ENCODE measurements at regions of chr12 and their contacts with region 1.

Region 1: DNA sequence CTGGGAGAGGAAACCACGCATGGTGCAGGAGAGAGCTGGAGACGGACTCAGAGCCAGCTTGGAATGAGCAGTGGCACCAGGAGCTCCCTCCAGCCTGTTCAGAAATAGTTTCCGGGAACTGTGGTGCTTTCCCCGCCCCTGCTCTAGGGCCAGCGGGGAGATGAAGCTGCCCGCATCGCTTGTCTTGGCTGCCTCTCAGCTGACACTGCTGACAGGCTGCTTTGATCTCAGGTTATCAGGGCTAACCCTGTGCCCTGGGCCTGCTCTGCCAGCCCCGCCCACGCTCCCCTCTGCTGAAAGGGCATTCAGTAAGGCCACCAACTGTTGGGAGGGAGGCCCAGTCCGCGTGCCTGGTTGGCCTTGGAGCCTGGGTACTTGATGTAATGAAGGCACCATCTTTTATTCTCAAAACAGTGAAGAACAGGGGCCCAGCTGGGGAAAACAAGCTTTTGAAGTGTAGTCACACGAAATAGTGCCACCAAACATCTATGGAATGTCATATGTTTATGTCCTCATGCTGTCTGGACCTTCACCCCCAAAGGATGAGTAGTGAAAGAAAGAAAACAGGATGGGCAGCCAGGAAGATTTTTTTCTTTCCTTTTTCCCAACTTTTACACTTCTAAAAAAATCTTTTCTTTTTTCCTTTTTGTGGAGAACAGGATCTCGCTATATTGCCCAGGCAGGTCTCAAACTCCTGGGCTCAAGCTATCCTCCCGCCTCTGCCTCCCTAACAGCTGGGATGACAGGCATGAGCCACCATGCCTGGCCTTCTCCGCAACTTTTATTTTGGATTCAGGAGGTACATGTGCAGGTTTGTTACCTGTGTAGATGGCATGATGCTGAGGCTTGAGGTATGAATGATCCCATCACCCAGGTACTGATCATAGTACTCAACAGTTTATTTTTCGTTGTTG is 115.9 kb upstream of the TBX3 start:
- DNase-seq: peak; percentile 100
- ATAC-seq: peak; percentile 99
- H3K4me3 ChIP-seq: no peak overlapping the region
- H3K27ac ChIP-seq: peak overlapping the region; percentile 85
- H3K4me1 ChIP-seq: peaks cover 46% of the 10 kb centered on the region
- H3K27me3 ChIP-seq: no peaks in the 10 kb centered on the region
- CTCF ChIP-seq: peak; percentile 36; the same call in 1 of the 2 replicates
- EP300 ChIP-seq: peak; percentile 91 to 98
- POLR2A ChIP-seq: peak; percentile 66 to 67
- RAD21 ChIP-seq: peak; percentile 65

Region 2: DNA sequence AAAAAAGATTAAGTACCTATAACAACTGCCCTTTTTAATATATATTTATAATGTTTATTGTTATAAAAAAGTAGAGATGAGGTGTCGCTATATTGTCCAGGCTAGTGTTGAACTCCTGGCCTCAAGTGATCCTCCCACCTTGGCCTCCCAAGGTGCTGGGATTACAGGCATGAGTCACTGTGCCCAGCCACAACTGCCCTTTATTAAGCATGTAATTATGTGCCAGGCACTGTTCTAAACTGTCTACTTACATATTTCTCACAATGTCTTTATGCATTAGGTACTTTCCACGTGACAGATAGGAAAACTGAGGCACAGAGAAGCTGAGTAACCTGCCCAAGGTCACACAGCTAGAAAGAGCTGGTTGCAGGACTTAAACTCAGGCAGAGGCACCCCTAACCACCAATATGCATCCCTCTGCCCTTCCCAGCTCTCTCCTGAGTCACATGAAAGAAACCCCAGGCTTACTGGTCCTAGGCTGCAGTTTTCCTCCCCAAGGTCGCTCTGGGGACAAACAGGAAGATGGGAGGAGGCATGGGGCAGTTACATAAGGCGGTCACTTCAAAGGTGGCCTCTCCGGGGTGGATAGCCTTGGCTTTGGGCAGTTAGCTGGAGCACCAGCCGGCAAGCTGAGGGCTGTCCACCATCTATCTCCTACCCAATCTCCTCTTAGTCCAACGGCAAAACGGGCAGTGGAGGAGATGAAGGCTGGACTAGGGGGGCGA is 61.2 kb before region 1 on chr12:
- CTCF ChIA-PET with region 1: no interaction called
- POLR2A ChIA-PET with region 1: interaction called, 10 read pairs
- in situ Hi-C with region 1: no loop called
- intact Hi-C with region 1: loop called (anchors 10 kb)
- DNase-seq: peak; percentile 96
- ATAC-seq: peak; percentile 93
- H3K4me3 ChIP-seq: no peak overlapping the region
- H3K27ac ChIP-seq: peak overlapping the region; percentile 32
- H3K4me1 ChIP-seq: peaks cover 39% of the 10 kb centered on the region
- H3K27me3 ChIP-seq: no peaks in the 10 kb centered on the region
- CTCF ChIP-seq: peak; percentile 27; the same call in 1 of the 2 replicates
- EP300 ChIP-seq: peak in 1 of 2 experiments; percentile 85; a peak in 2 of 4 replicates
- POLR2A ChIP-seq: no peak
- RAD21 ChIP-seq: no peak

Region 3: GRCh38 chr12:114744691-114745090 is 55.1 kb before region 1 on chr12:
- CTCF ChIA-PET with region 1: no interaction called
- POLR2A ChIA-PET with region 1: interaction called, 10 read pairs
- in situ Hi-C with region 1: no loop called
- intact Hi-C with region 1: loop called (anchors 10 kb)
- DNase-seq: no peak
- ATAC-seq: no peak; the same call in 2 of the 3 replicates
- H3K4me3 ChIP-seq: no peak overlapping the region
- H3K27ac ChIP-seq: no peak overlapping the region
- H3K4me1 ChIP-seq: peaks cover 50% of the 10 kb centered on the region
- H3K27me3 ChIP-seq: no peaks in the 10 kb centered on the region
- CTCF ChIP-seq: no peak
- EP300 ChIP-seq: no peak
- POLR2A ChIP-seq: no peak
- RAD21 ChIP-seq: no peak

Region 4: GRCh38 chr12:114812858-114813761 is 13.3 kb after region 1 on chr12:
- CTCF ChIA-PET with region 1: no interaction called
- POLR2A ChIA-PET with region 1: interaction called, 25 read pairs
- in situ Hi-C with region 1: no loop called
- intact Hi-C with region 1: no loop called
- DNase-seq: peak; percentile 75
- ATAC-seq: peak; percentile 72
- H3K4me3 ChIP-seq: peak overlapping the region; percentile 19 to 48 (median 47); a peak in 5 of 6 replicates
- H3K27ac ChIP-seq: no peak overlapping the region
- H3K4me1 ChIP-seq: peaks cover 38% of the 10 kb centered on the region
- H3K27me3 ChIP-seq: no peaks in the 10 kb centered on the region; a peak in 1 of 5 replicates
- CTCF ChIP-seq: no peak
- EP300 ChIP-seq: peak in 1 of 2 experiments; percentile 66; a peak in 2 of 4 replicates
- POLR2A ChIP-seq: no peak
- RAD21 ChIP-seq: no peak

Region 5: GRCh38 chr12:114918535-114919233 is 118.9 kb after region 1 on chr12:
- CTCF ChIA-PET with region 1: no interaction called
- POLR2A ChIA-PET with region 1: interaction called, 8 read pairs
- in situ Hi-C with region 1: no loop called
- intact Hi-C with region 1: loop called (anchors 5 kb)
- DNase-seq: peak; percentile 93
- ATAC-seq: peak; percentile 97
- H3K4me3 ChIP-seq: no peak overlapping the region
- H3K27ac ChIP-seq: peak overlapping the region; percentile 24
- H3K4me1 ChIP-seq: peaks cover 28% of the 10 kb centered on the region
- H3K27me3 ChIP-seq: no peaks in the 10 kb centered on the region
- CTCF ChIP-seq: no peak
- EP300 ChIP-seq: peak in 1 of 2 experiments; percentile 34; a peak in 1 of 4 replicates
- POLR2A ChIP-seq: no peak
- RAD21 ChIP-seq: no peak

Region 6: GRCh38 chr12:115398311-115398781 is 598.5 kb after region 1 on chr12:
- CTCF ChIA-PET with region 1: no interaction called
- POLR2A ChIA-PET with region 1: interaction called, 5 read pairs
- in situ Hi-C with region 1: no loop called
- intact Hi-C with region 1: loop called (anchors 10 kb)
- DNase-seq: peak; percentile 92
- ATAC-seq: peak; percentile 100
- H3K4me3 ChIP-seq: no peak overlapping the region
- H3K27ac ChIP-seq: peak overlapping the region; percentile 30
- H3K4me1 ChIP-seq: peaks cover 57% of the 10 kb centered on the region
- H3K27me3 ChIP-seq: no peaks in the 10 kb centered on the region
- CTCF ChIP-seq: peak; percentile 96
- EP300 ChIP-seq: peak in 1 of 2 experiments; percentile 62; a peak in 2 of 4 replicates
- POLR2A ChIP-seq: no peak
- RAD21 ChIP-seq: peak; percentile 97

Region 7: DNA sequence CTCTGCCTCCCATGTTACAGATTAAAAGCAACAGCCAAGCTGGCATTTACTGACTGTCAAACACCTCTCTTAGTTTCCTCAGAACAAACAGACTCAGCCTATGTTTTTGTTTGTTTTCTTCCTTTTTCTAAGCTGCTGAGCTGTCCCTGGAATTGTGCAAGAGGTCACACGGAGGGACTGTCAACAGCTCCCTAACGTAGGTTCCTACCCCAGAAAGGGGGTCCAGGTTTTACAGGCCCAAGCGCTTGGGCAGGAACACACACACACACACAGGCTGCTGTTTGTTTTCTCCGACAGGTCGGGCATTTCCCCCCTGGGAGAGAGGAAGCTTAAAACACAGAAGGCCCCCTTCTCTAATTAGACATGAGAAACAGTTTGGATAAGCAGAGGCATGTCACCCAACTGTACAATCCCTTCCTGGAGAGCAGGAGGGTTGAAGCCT is 623.7 kb after region 1 on chr12:
- CTCF ChIA-PET with region 1: no interaction called
- POLR2A ChIA-PET with region 1: interaction called, 14 read pairs
- in situ Hi-C with region 1: no loop called
- intact Hi-C with region 1: no loop called
- DNase-seq: peak; percentile 98
- ATAC-seq: peak; percentile 67
- H3K4me3 ChIP-seq: no peak overlapping the region
- H3K27ac ChIP-seq: peak overlapping the region; percentile 86
- H3K4me1 ChIP-seq: peaks cover 100% of the 10 kb centered on the region
- H3K27me3 ChIP-seq: no peaks in the 10 kb centered on the region
- CTCF ChIP-seq: 0 out of 2 replicates have a peak, but pooled peaks have one; percentile 15
- EP300 ChIP-seq: peak; percentile 73 to 99; a peak in 3 of 4 replicates
- POLR2A ChIP-seq: no peak
- RAD21 ChIP-seq: peak; percentile 61